Posterior vena cava (tissue), 2 donors: ENCODE measurements at regions of chr7 and their contacts with region 1.

Region 1: DNA sequence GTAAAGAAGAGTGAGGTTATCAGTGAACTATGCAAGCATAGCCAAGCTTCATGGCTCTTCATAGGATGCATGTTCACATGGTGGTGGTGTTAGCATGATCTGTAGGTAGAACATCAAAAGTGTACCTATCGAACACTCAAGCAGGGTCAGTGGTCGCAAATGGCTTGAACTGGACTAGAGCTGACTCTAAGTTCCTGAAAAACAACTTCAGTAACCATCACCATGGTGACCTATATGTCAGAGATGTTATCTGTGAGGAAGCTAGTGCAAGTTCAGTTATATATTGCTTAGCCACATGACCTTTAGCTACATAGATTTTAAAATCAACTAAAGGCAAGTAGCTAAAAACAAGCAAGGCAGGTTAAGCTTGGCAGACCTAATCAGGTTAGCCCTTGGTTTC is 163.1 kb upstream of the AGR3 start:
- DNase-seq: no peak

Region 2: GRCh38 chr7:16786257-16786656 is 258.6 kb before region 1 on chr7:
- intact Hi-C with region 1: loop called in 1 of 2 experiments (anchors 5 kb)
- DNase-seq: no peak